ENCODE measurements at regions of chr10 and their contacts with region 1.

Region 1: DNA sequence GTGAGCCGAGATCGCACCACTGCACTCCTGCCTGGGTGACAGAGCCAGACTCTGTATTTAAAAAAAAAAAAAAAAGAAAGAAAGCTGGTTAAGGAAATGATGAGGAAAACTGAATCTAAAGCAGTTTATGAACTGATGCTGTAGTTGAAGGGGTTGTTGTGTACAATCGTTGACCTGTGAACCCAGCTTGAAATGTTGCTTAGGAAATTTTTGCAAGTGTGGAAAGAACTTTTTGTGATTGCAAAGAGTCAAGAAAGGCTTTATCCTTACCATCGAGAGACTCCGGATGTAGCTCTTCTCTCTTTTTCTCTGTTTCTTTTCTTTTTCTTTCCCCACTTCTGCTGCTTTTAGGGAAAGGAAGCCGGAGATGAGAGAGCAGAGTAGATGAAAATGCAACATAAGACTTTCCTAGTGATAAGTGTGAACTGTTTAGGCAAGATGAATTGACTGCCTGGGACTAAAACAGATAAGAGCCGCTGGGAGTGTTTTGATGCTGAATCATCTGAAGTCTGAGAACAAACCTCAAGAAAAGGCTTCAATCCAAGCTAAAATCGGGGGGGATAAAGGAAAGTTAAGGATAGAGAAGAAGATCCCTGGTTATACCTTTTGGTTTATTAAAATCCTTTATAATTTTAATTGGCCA is 69.0 kb downstream of the TAF3 start:
- DNase-seq: no peak
- H3K4me3 ChIP-seq: no peak overlapping the region
- H3K27ac ChIP-seq: no peak overlapping the region
- H3K4me1 ChIP-seq: no peaks in the 10 kb centered on the region
- H3K27me3 ChIP-seq: no peaks in the 10 kb centered on the region
- CTCF ChIP-seq: no peak
- POLR2A ChIP-seq: no peak

Region 2: GRCh38 chr10:9209105-9209798 is 1322.0 kb after region 1 on chr10:
- intact Hi-C with region 1: loop called (anchors 10 kb)
- DNase-seq: peak; percentile 52 to 80
- H3K4me3 ChIP-seq: no peak overlapping the region
- H3K27ac ChIP-seq: no peak overlapping the region
- H3K4me1 ChIP-seq: no peaks in the 10 kb centered on the region
- H3K27me3 ChIP-seq: no peaks in the 10 kb centered on the region
- CTCF ChIP-seq: peak; percentile 86 to 94 (median 87)
- POLR2A ChIP-seq: no peak